Dorsolateral prefrontal cortex (tissue), 120 donors: ENCODE measurements at regions of chr11 and their contacts with region 1.

Region 1: DNA sequence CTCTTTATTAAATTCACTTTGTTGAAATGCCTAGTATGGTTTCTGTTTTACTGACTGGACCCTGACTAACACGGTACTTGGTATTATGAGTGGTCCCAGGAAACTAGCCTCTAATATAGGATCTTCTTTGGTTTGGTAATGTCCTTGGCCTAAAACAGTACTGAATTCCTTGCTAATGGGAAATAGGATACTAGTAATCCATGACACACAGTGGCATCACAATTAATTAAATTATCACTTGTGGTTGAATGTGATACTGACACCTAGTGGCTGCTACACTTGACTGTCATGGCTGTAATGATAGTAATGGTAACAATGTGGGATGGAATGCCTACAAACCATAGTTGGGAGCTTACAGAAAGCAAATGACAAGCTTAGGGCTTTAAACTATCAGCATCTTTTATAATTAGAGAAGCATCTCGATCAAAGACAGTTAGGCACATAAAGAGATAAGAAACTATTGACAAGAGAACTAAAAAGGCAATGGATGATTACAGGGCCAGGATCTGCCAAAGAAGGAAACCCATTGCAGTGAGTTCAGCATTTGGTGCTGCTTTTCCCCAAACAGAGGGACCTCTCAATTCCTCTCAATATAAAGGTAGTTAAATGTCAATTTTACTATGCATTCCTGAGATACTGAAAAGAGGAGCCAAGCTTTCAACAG is 8.6 kb downstream of the DNHD1 start:
- DNase-seq: peak in 1 of 10 donors; percentile 26
- H3K4me3 ChIP-seq: no peak overlapping the region
- H3K27ac ChIP-seq: peak overlapping the region in 8 of 59 donors; percentile 10 to 40 (median 20)
- H3K27me3 ChIP-seq: no peaks in the 10 kb centered on the region
- CTCF ChIP-seq: peak; percentile 49 to 84 (median 74)

Region 2: GRCh38 chr11:6298605-6299004 is 207.1 kb before region 1 on chr11:
- intact Hi-C with region 1: no loop called
- DNase-seq: peak in 1 of 10 donors; percentile 11
- H3K4me3 ChIP-seq: no peak overlapping the region
- H3K27ac ChIP-seq: no peak overlapping the region
- H3K27me3 ChIP-seq: peaks cover 0 to 2% (median 0%) of the 10 kb centered on the region in 45 donors
- CTCF ChIP-seq: peak in 15 of 56 donors; percentile 8 to 37 (median 20)

Region 3: DNA sequence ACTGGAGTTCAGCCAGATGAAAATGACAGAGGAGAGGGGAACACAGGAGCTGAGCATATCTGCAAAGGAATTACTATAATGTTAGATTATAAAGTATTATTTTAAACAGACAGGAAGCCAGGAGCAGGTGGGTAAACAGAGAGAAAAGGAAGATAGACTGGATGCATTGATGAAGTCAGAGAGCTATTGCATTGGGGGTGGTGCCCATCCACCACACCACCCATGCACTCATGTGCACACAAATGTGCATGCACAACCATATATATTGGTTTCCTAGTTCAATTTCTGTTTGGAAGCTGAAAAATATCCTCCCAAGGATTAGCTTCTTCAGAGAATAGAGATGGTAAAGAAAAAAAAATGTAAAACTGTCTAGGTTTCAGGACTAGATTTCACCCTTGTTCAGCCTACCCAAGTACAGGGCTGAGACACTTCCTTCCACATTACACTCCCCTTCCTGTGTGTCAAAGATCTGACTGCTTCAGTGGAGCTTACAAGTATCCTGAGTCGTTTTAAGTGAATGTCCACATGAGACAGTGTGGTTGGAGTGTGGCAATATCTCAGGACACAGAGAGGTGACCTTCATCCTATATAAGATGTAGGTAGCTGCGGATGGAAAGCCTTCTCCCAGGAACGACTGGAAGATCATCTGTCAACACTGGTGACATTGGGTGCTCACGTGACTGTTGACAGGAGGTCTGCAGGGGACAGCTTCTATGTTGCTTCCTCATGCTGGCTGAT is 127.6 kb before region 1 on chr11:
- intact Hi-C with region 1: loop called in 1 of 2 experiments (anchors 5 kb)
- DNase-seq: no peak
- H3K4me3 ChIP-seq: no peak overlapping the region
- H3K27ac ChIP-seq: no peak overlapping the region
- H3K27me3 ChIP-seq: no peaks in the 10 kb centered on the region
- CTCF ChIP-seq: no peak

Region 4: DNA sequence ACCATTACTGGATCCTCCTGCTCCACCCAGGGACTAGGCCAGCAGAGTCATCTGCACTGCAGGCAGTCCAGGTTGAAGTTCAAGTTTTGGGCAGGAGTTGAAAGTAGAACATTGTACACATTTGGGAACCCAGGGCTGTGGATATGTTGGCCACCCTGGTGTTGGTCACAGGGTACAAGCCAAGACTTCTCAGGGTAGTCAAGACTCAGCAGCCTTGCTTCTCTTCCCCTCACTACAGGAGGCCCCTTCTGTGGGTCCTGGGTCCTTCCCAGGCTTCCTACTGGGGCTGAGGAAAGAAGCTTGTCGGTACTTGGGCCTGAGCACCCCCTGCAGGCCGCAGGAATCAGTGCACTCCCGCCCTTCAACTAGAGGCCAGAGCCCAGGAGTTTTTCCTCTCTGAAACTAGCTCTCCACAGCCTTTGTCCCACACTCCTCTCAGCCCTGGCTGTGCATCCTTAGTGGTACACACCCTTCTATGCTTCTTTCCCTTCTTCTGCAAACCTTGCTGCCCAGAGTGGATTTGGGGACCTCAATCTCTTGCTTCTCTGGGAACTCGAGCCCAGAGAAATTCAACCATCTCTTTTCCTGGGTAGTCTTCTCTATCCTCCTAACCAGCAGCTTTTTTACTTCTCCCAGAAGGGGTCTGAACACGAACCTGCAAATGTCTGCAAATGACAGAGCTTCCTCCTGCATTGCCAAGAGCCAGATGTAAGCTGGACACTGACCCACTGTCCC is 62.3 kb before region 1 on chr11:
- intact Hi-C with region 1: loop called in 1 of 2 experiments (anchors 5 kb)
- DNase-seq: peak; percentile 55 to 83 (median 68)
- H3K4me3 ChIP-seq: no peak overlapping the region
- H3K27ac ChIP-seq: peak overlapping the region in 10 of 59 donors; percentile 0 to 66 (median 21)
- H3K27me3 ChIP-seq: no peaks in the 10 kb centered on the region
- CTCF ChIP-seq: peak; percentile 68 to 96 (median 90)

Region 5: DNA sequence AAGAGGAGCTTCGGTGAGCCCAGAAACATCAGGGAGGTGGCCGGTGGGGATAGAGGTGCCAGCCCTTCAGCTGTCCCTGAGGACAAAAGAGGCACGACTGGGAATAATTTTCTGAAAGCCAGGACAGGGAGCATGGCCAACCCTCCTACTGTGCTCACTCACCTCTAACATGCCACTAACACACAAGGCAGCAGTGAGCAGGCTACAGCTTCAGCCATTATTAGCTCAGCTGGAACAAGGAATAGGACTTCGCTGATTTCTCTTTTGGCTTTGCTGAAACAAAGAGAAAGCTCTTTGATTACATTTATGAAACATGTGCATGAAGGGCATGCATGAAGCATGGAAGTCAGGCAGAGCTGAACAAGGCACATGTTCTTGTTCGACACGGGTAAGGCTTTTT is 327.6 kb after region 1 on chr11:
- intact Hi-C with region 1: no loop called
- DNase-seq: no peak
- H3K4me3 ChIP-seq: no peak overlapping the region
- H3K27ac ChIP-seq: no peak overlapping the region
- H3K27me3 ChIP-seq: peaks cover 0 to 3% (median 0%) of the 10 kb centered on the region in 45 donors
- CTCF ChIP-seq: no peak